Activated CD8-positive, alpha-beta memory T cell treated with anti-CD3 and anti-CD28 coated beads, Interleukin-2, amount 10 ng/mL, durations not matched to agents 7 days and 5 days (primary cell): ENCODE measurements at regions of chr2 and their contacts with region 1.

Region 1: DNA sequence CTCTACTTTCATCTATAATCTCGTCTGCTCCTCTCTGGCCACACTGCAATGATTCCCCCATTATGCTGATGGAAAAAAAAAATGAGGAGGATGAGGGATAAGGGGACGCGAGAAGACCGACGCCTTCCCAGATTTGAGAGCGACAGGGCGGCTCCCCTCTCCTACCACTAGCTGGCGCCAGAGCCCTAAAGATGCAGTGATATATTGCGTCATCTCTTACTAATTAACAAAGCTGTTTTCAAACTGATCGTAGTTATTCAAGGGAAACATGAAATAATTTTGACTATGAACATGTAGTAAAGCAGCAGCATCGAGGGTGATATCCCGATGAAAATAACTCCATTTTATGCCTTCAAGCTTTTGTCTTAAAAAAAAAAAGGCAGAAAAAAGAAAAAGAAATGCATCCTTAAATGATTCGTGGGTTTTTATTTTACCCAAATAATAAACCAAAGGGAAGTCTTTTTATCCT is 48.0 kb upstream of the HNRNPA3 start:
- DNase-seq: peak; percentile 86
- ATAC-seq: peak; percentile 78
- H3K4me3 Mint-ChIP-seq: no peak overlapping the region
- H3K27ac Mint-ChIP-seq: no peak overlapping the region
- H3K4me1 Mint-ChIP-seq: peaks cover 37% of the 10 kb centered on the region
- H3K27me3 Mint-ChIP-seq: peaks cover 4% of the 10 kb centered on the region

Region 2: GRCh38 chr2:177148477-177149154 is 16.0 kb before region 1 on chr2:
- CTCF ChIA-PET with region 1: interaction called, 34 read pairs
- DNase-seq: peak; percentile 86
- ATAC-seq: peak; percentile 97
- H3K4me3 Mint-ChIP-seq: peak overlapping the region; percentile 88
- H3K27ac Mint-ChIP-seq: peak overlapping the region; percentile 67
- H3K4me1 Mint-ChIP-seq: peaks cover 25% of the 10 kb centered on the region
- H3K27me3 Mint-ChIP-seq: peaks cover 61% of the 10 kb centered on the region

Region 3: DNA sequence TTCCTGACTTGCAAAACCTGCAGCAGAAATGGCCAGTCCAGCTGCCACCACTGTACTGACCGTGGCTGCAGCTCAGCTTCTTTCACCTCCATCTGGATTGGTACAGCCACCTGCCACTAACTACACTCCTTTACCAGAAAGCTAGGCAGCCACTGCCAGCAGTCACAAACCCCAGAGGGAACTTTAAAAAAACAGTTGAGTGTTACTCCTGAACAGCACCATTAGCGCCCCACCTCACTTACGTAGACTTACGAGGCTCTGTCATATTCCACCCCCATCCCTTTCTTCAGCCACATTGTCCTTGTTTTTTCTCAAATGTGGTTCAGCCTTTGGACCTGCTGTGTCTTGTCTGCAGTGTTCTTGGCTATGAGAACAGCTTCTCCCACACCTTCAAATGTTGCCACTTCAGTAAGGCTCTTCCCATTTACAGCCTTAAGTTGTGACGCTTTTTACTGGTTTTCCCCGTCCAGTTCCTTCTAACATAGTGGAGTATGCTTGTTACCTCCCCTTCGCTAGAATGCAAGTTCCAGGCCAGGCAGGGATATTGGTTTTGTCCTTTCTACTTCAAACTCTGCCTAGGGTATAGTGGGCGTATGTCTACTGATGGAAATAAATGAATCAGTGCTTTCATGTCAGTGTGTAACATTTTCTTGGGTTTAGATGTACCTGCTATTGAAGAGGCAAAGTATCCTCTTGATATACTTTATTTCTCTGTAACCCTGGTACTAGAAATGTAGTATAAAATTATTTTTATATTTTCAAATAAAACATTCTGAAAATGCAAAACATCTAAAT is 65.0 kb after region 1 on chr2:
- CTCF ChIA-PET with region 1: interaction called, 16 read pairs
- DNase-seq: no peak
- ATAC-seq: peak; percentile 21
- H3K4me3 Mint-ChIP-seq: no peak overlapping the region
- H3K27ac Mint-ChIP-seq: peak overlapping the region; percentile 3
- H3K4me1 Mint-ChIP-seq: peaks cover 15% of the 10 kb centered on the region
- H3K27me3 Mint-ChIP-seq: no peaks in the 10 kb centered on the region

Region 4: DNA sequence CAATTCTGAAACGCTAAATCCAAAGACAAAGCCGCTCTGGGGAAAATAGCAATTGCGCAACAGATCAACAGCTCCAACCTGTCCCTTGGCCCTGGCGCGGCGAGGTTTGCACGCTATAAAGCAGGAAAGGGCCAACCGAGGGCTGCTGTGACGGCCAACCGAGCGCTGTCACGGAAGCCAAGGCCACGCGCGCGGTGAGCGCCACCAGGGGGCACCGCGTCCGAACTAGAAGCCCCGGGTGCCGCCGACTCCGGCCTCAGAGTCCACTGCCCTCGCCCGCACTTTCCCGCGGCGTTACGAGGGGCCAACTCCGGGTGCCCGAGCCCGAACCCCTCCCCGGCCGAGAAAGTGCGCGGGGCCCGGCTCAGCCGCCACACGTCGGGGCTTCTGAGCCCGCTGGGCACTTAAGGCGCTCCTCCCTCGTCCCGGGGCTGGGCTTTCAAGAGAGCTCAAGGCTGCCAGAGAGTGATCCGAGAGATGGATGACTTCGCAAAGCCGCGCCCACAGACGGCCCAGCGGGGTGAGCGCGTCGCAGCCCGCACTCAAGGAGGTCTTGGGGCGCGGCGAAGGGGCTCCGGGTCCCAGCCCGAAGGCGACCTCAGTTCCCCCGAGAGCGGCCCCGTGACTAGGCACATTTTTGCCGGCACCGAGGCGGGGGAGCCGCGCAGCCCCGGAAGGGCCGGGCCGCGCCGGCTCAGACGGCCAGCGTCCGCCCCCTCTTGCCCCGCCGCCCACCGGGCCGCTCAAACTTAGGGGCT is 99.0 kb after region 1 on chr2:
- CTCF ChIA-PET with region 1: interaction called, 82 read pairs
- DNase-seq: peak; percentile 96
- ATAC-seq: peak; percentile 65
- H3K4me3 Mint-ChIP-seq: peak overlapping the region; percentile 97
- H3K27ac Mint-ChIP-seq: peak overlapping the region; percentile 96
- H3K4me1 Mint-ChIP-seq: peaks cover 55% of the 10 kb centered on the region
- H3K27me3 Mint-ChIP-seq: no peaks in the 10 kb centered on the region

Region 5: GRCh38 chr2:177332041-177332991 is 167.7 kb after region 1 on chr2:
- CTCF ChIA-PET with region 1: interaction called, 162 read pairs
- DNase-seq: peak; percentile 55
- ATAC-seq: peak; percentile 83
- H3K4me3 Mint-ChIP-seq: no peak overlapping the region
- H3K27ac Mint-ChIP-seq: peak overlapping the region; percentile 33
- H3K4me1 Mint-ChIP-seq: peaks cover 9% of the 10 kb centered on the region
- H3K27me3 Mint-ChIP-seq: no peaks in the 10 kb centered on the region

Region 6: GRCh38 chr2:177604271-177605065 is 439.9 kb after region 1 on chr2:
- CTCF ChIA-PET with region 1: interaction called, 10 read pairs
- DNase-seq: no peak
- ATAC-seq: peak; percentile 36
- H3K4me3 Mint-ChIP-seq: no peak overlapping the region
- H3K27ac Mint-ChIP-seq: no peak overlapping the region
- H3K4me1 Mint-ChIP-seq: peaks cover 9% of the 10 kb centered on the region
- H3K27me3 Mint-ChIP-seq: peaks cover 3% of the 10 kb centered on the region